CD8-positive, alpha-beta memory T cell (primary cell): ENCODE measurements at regions of chr20 and their contacts with region 1.

Region 1: DNA sequence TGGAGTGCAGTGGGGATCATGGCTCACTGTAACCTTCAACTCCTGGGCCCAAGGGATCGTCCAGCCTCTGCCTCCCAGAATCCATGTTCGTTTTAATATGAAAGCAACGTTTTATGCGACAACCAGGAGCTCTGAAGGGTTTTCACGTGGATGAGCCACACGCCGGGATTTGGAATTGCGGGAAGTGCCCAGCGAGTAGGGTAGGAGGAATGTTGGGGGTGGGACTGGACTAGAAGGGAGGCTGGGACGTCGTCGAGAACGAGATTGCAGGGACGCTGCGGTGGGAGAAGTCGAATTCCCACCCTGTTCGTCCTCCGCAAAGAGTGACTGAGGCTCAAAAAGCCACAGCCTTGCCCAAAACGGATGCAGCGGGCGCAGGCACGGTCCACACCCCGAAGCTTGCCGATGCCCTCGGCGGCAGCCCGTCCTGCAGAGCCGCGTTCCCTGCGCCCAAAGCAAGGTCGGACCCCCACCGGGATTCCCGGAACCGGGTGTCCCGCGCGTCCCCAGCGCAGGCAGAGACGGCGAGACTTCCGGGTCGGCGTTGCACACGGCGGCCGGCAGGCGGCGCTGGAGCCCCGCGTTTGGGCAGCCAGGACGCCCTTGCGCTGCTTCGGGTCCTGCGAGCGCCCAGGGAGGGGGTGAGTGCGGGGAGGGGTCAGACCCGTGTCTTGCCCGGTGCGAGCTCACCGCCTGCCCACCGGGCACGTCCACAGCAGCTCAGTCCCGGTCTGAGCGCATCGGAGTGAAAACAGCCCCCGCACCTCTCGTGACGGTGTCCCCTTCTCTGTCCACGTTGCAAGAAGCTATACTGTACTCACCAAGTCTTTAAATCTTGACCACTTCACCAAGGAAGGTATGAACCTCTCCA is 87.8 kb downstream of the DHX35 start:
- DNase-seq: peak; percentile 73 to 84 (median 75)
- H3K4me3 ChIP-seq: peak overlapping the region; percentile 73
- H3K4me3 Mint-ChIP-seq: peak overlapping the region; percentile 85 to 91 (median 86)
- H3K27ac ChIP-seq: no peak overlapping the region
- H3K27ac Mint-ChIP-seq: peak overlapping the region in 7 of 8 donors; percentile 42 to 100 (median 86)
- H3K4me1 ChIP-seq: peaks cover 9% of the 10 kb centered on the region
- H3K4me1 Mint-ChIP-seq: peaks cover 5 to 18% (median 8%) of the 10 kb centered on the region in 3 donors
- H3K27me3 ChIP-seq: no peaks in the 10 kb centered on the region
- H3K27me3 Mint-ChIP-seq: no peaks in the 10 kb centered on the region

Region 2: DNA sequence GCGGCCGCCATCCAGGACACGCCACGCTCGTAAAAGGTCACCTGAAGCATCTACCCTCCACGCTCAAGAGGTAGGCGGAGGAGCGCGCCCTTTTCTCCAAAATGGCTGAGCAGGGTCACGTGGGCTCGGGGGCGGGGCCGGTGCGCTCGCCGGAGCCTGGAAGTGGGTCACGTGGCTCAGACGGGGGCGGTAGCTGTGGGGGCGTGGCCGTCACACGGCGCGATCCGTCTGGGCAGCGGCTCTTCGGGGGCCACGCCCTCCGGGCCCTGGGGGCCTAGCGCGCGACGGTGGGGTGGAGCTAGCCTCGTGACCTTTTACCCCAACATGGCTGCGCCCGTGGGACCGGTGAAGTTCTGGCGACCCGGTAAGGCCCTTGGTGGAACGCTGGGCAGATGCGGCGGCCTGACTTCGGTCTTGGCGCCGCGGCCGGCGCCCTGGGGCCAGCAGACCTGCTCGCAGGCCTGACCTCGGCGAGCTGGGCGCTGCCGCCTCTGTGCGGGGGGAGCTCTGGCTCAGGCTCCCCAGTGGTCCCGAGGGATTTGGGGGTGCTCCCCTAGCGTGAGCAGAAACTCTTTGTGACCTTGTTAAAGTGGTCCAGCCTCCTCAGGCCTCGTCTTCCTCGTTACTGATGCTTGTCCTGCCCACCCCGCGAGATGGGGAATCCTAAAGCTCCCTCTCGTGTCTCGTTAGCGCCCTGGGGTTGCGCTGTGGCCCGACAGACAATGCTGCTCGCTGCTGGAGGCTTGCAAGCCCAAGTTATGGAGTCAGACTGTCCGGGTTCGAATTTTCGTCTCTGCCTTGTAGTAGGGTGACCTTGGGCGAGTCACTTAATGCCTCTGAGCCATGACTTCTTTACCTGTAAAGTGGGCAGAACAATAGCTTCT is 87.6 kb before region 1 on chr20 and contains the start of gene DHX35:
- CTCF ChIA-PET with region 1: interaction called, 22 read pairs
- POLR2A ChIA-PET with region 1: no interaction called
- DNase-seq: peak; percentile 98 to 99 (median 98)
- H3K4me3 ChIP-seq: peak within 1 kb of the TSS; percentile 99
- H3K4me3 Mint-ChIP-seq: peak within 1 kb of the TSS; percentile 91 to 98 (median 95)
- H3K27ac ChIP-seq: peak within 1 kb of the TSS; percentile 84
- H3K27ac Mint-ChIP-seq: peak within 1 kb of the TSS; percentile 85 to 97 (median 95)
- H3K4me1 ChIP-seq: peaks cover 21% of the 10 kb centered on the region
- H3K4me1 Mint-ChIP-seq: peaks cover 23 to 34% (median 33%) of the 10 kb centered on the region in 3 donors
- H3K27me3 ChIP-seq: no peaks in the 10 kb centered on the region
- H3K27me3 Mint-ChIP-seq: no peaks in the 10 kb centered on the region
- total RNA-seq, gene DHX35: 19.9 to 20.5 TPM

Region 3: GRCh38 chr20:38990728-38991127 is 59.2 kb before region 1 on chr20:
- CTCF ChIA-PET with region 1: no interaction called
- POLR2A ChIA-PET with region 1: no interaction called
- DNase-seq: no peak
- H3K4me3 ChIP-seq: no peak overlapping the region
- H3K4me3 Mint-ChIP-seq: no peak overlapping the region
- H3K27ac ChIP-seq: no peak overlapping the region
- H3K27ac Mint-ChIP-seq: no peak overlapping the region
- H3K4me1 ChIP-seq: no peaks in the 10 kb centered on the region
- H3K4me1 Mint-ChIP-seq: peaks cover 0 to 9% (median 7%) of the 10 kb centered on the region in 3 donors
- H3K27me3 ChIP-seq: no peaks in the 10 kb centered on the region
- H3K27me3 Mint-ChIP-seq: no peaks in the 10 kb centered on the region

Region 4: DNA sequence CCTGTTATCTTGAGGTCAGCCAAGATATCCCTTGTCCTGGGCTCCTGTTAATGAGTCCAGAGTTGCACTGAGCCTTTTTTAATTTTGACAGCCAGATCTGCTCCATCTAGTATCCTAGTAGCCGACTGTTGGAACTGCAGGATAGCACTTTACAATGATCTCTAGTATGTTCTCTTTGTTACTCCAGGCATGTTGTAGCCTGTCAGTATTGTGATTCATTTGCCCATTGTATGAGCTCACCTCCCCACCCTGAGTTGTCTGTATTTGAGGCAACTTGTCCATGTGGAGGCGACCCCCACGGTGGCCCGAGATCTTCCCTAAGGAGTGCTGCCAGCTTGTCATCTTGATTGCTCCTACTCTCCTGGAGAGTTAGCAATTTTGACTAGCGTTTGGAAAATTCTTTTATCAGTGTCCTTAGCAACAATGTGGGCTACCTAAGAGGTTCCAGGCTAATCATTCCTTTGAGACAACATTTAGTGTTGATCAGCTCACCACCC is 20.5 kb before region 1 on chr20:
- CTCF ChIA-PET with region 1: interaction called, 15 read pairs
- POLR2A ChIA-PET with region 1: no interaction called
- DNase-seq: no peak
- H3K4me3 ChIP-seq: no peak overlapping the region
- H3K4me3 Mint-ChIP-seq: no peak overlapping the region
- H3K27ac ChIP-seq: no peak overlapping the region
- H3K27ac Mint-ChIP-seq: peak overlapping the region in 1 of 8 donors; percentile 61
- H3K4me1 ChIP-seq: peaks cover 5% of the 10 kb centered on the region
- H3K4me1 Mint-ChIP-seq: peaks cover 21 to 24% (median 24%) of the 10 kb centered on the region in 3 donors
- H3K27me3 ChIP-seq: no peaks in the 10 kb centered on the region
- H3K27me3 Mint-ChIP-seq: peaks cover 0 to 2% of the 10 kb centered on the region in 2 donors

Region 5: GRCh38 chr20:39036851-39037250 is 13.1 kb before region 1 on chr20:
- CTCF ChIA-PET with region 1: interaction called, 25 read pairs
- POLR2A ChIA-PET with region 1: no interaction called
- DNase-seq: no peak
- H3K4me3 ChIP-seq: no peak overlapping the region
- H3K4me3 Mint-ChIP-seq: no peak overlapping the region
- H3K27ac ChIP-seq: no peak overlapping the region
- H3K27ac Mint-ChIP-seq: peak overlapping the region in 1 of 8 donors; percentile 35
- H3K4me1 ChIP-seq: no peaks in the 10 kb centered on the region
- H3K4me1 Mint-ChIP-seq: no peaks in the 10 kb centered on the region
- H3K27me3 ChIP-seq: no peaks in the 10 kb centered on the region
- H3K27me3 Mint-ChIP-seq: peaks cover 0 to 2% of the 10 kb centered on the region in 2 donors

Region 6: DNA sequence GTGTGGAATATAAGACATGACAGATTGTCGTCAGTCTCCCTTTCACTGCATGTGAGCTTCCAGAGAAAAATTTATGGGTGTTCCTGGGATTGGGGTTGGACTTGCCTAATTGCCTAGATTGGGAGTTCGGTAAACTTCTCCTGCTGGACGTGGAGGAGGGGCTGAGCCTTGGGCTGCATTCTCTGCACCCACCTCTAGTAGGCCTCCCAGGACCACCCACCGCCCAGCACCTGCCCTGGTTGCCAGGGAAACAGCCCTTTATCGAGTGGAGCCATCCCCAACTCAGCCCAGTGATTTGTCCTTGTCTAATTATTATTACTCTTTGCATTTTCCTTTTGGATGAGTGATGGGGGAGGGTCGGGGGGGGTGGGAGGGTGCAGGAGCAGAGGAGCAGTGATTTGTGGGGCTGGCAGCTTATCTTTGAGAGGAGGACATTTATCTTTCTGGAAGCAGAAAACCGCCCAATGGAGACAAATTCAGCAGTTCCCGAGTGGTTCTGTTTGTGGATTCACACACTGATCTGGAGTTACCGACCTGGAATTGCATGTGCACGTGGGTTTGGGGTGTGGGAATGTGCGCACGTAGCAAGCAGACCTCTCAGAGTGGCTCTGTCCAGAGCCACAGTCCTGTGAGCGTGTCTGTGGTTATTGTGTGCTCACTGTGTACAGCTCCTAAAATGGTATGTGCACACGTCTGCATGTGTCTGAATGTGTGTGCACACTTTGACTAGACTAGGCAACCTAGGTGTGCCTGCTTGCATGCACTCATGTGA is 16.7 kb after region 1 on chr20:
- CTCF ChIA-PET with region 1: interaction called, 19 read pairs
- POLR2A ChIA-PET with region 1: no interaction called
- DNase-seq: no peak
- H3K4me3 ChIP-seq: no peak overlapping the region
- H3K4me3 Mint-ChIP-seq: no peak overlapping the region
- H3K27ac ChIP-seq: no peak overlapping the region
- H3K27ac Mint-ChIP-seq: no peak overlapping the region
- H3K4me1 ChIP-seq: no peaks in the 10 kb centered on the region
- H3K4me1 Mint-ChIP-seq: no peaks in the 10 kb centered on the region
- H3K27me3 ChIP-seq: no peaks in the 10 kb centered on the region
- H3K27me3 Mint-ChIP-seq: peaks cover 14 to 32% of the 10 kb centered on the region in 2 donors

Region 7: DNA sequence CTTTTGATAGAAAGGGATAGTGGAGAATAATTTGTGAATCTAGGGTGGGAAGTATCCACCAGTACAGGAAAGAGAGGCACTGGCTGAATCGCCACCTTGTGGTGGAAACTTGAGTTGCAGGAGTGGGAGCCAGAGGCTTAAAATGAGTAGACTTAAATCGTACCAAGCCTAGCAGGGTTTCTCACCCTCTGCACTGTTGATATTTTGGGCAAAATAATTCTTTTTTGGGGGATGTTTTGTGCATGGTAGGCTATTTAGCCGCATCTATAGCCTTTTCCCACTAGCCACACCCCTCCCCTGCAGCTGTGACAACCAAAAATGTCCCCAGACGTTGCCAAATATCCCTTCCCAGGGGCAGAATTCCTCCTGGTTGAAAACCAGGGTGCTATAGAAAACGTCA is 31.3 kb after region 1 on chr20:
- CTCF ChIA-PET with region 1: interaction called, 202 read pairs
- POLR2A ChIA-PET with region 1: no interaction called
- DNase-seq: peak; percentile 61 to 85 (median 73)
- H3K4me3 ChIP-seq: no peak overlapping the region
- H3K4me3 Mint-ChIP-seq: no peak overlapping the region
- H3K27ac ChIP-seq: no peak overlapping the region
- H3K27ac Mint-ChIP-seq: peak overlapping the region in 1 of 8 donors; percentile 17
- H3K4me1 ChIP-seq: no peaks in the 10 kb centered on the region
- H3K4me1 Mint-ChIP-seq: peaks cover 0 to 10% (median 7%) of the 10 kb centered on the region in 3 donors
- H3K27me3 ChIP-seq: peaks cover 8% of the 10 kb centered on the region
- H3K27me3 Mint-ChIP-seq: peaks cover 7 to 47% of the 10 kb centered on the region in 2 donors

Region 8: GRCh38 chr20:39089029-39089428 is 39.1 kb after region 1 on chr20:
- CTCF ChIA-PET with region 1: interaction called, 202 read pairs
- POLR2A ChIA-PET with region 1: no interaction called
- DNase-seq: no peak
- H3K4me3 ChIP-seq: no peak overlapping the region
- H3K4me3 Mint-ChIP-seq: no peak overlapping the region
- H3K27ac ChIP-seq: no peak overlapping the region
- H3K27ac Mint-ChIP-seq: peak overlapping the region in 2 of 8 donors; percentile 67 to 77
- H3K4me1 ChIP-seq: no peaks in the 10 kb centered on the region
- H3K4me1 Mint-ChIP-seq: peaks cover 0 to 4% (median 0%) of the 10 kb centered on the region in 3 donors
- H3K27me3 ChIP-seq: no peaks in the 10 kb centered on the region
- H3K27me3 Mint-ChIP-seq: peaks cover 10 to 28% of the 10 kb centered on the region in 2 donors